Activated CD8-positive, alpha-beta T cell treated with anti-CD3 and anti-CD28 coated beads for 36 hours (primary cell): ENCODE measurements at regions of chr5 and their contacts with region 1.

Region 1: GRCh38 chr5:98768160-98769005 is 5.1 kb upstream of the RGMB start:
- DNase-seq: peak; percentile 35
- ATAC-seq: peak; percentile 52
- H3K4me3 Mint-ChIP-seq: peak overlapping the region; percentile 78
- H3K27ac Mint-ChIP-seq: no peak overlapping the region
- H3K4me1 Mint-ChIP-seq: peaks cover 25% of the 10 kb centered on the region
- H3K27me3 Mint-ChIP-seq: peaks cover 38% of the 10 kb centered on the region
- CTCF ChIP-seq: peak; percentile 68

Region 2: DNA sequence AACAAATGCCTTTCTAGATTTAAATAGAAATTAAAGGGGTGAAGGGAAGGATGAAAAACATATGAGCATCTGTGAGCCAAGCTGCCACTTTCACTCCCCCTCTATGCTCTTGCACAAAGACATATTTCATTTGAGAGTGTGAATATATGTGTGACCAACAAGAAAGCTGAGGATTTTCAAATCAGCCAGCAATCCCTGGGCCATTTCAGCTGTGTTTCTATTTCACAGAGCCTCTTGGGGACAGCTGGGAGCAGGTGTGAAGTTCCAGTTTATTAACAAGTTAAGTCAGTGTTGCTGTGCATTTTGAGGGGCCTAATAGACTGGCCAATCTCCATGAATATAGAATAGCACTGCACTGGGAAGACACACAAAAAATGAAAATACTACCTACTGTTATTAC is 243.6 kb before region 1 on chr5:
- CTCF ChIA-PET with region 1: no interaction called
- POLR2A ChIA-PET with region 1: no interaction called
- intact Hi-C with region 1: no loop called
- DNase-seq: no peak
- ATAC-seq: no peak
- H3K4me3 Mint-ChIP-seq: no peak overlapping the region
- H3K27ac Mint-ChIP-seq: no peak overlapping the region
- H3K4me1 Mint-ChIP-seq: no peaks in the 10 kb centered on the region
- H3K27me3 Mint-ChIP-seq: peaks cover 3% of the 10 kb centered on the region
- CTCF ChIP-seq: no peak

Region 3: GRCh38 chr5:98742396-98743073 is 25.8 kb before region 1 on chr5:
- CTCF ChIA-PET with region 1: interaction called, 25 read pairs
- POLR2A ChIA-PET with region 1: interaction called, 3 read pairs
- intact Hi-C with region 1: no loop called
- DNase-seq: no peak
- ATAC-seq: no peak
- H3K4me3 Mint-ChIP-seq: no peak overlapping the region
- H3K27ac Mint-ChIP-seq: no peak overlapping the region
- H3K4me1 Mint-ChIP-seq: no peaks in the 10 kb centered on the region
- H3K27me3 Mint-ChIP-seq: peaks cover 23% of the 10 kb centered on the region
- CTCF ChIP-seq: no peak

Region 4: DNA sequence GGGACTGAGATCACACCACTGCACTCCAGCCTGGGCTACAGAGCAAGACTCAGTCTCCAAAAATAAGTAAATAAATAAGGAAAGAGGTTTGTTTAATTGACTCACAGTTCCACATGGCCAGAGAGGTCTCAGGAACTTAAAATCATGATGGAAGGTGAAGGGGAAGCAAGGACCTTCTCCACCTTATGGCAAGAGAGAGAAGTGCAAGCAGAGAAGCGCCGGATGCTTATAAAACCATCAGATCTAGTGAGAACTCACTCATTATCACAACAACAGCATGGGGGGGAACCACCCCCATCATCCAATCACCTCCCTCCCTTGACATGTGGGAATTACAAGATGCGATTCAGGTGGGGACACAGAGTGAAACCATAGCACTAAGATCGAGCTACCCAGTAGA is 17.7 kb before region 1 on chr5:
- CTCF ChIA-PET with region 1: interaction called, 39 read pairs
- POLR2A ChIA-PET with region 1: interaction called, 3 read pairs
- intact Hi-C with region 1: no loop called
- DNase-seq: peak; percentile 19
- ATAC-seq: peak; percentile 64
- H3K4me3 Mint-ChIP-seq: no peak overlapping the region
- H3K27ac Mint-ChIP-seq: no peak overlapping the region
- H3K4me1 Mint-ChIP-seq: no peaks in the 10 kb centered on the region
- H3K27me3 Mint-ChIP-seq: peaks cover 13% of the 10 kb centered on the region
- CTCF ChIP-seq: peak; percentile 18

Region 5: DNA sequence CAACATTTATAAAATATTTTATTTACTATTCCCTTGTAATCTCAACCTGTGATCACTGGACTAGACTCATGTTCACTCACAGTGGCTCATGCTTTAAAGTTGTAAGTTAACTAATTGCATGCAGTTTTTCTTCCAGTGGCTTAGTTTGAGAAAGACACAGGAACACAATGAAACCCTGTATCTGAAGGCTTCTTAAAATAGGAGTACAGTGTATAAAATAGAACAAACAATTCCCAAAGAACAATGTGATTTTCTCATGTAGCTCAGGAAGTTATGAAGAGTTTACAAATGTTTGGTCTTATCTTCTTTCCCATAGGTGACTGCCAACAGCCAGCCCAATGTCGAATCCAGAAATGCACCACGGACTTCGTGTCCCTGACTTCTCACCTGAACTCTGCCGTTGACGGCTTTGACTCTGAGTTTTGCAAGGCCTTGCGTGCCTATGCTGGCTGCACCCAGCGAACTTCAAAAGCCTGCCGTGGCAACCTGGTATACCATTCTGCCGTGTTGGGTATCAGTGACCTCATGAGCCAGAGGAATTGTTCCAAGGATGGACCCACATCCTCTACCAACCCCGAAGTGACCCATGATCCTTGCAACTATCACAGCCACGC is 11.0 kb after region 1 on chr5:
- CTCF ChIA-PET with region 1: interaction called, 228 read pairs
- POLR2A ChIA-PET with region 1: no interaction called
- intact Hi-C with region 1: no loop called
- DNase-seq: no peak
- ATAC-seq: no peak
- H3K4me3 Mint-ChIP-seq: no peak overlapping the region
- H3K27ac Mint-ChIP-seq: no peak overlapping the region
- H3K4me1 Mint-ChIP-seq: peaks cover 15% of the 10 kb centered on the region
- H3K27me3 Mint-ChIP-seq: peaks cover 22% of the 10 kb centered on the region
- CTCF ChIP-seq: no peak